Activated naive CD8-positive, alpha-beta T cell treated with anti-CD3 and anti-CD28 coated beads, Interleukin-2, amount 10 ng/mL, durations not matched to agents 7 days and 5 days (primary cell): ENCODE measurements at regions of chr4 and their contacts with region 1.

Region 1: DNA sequence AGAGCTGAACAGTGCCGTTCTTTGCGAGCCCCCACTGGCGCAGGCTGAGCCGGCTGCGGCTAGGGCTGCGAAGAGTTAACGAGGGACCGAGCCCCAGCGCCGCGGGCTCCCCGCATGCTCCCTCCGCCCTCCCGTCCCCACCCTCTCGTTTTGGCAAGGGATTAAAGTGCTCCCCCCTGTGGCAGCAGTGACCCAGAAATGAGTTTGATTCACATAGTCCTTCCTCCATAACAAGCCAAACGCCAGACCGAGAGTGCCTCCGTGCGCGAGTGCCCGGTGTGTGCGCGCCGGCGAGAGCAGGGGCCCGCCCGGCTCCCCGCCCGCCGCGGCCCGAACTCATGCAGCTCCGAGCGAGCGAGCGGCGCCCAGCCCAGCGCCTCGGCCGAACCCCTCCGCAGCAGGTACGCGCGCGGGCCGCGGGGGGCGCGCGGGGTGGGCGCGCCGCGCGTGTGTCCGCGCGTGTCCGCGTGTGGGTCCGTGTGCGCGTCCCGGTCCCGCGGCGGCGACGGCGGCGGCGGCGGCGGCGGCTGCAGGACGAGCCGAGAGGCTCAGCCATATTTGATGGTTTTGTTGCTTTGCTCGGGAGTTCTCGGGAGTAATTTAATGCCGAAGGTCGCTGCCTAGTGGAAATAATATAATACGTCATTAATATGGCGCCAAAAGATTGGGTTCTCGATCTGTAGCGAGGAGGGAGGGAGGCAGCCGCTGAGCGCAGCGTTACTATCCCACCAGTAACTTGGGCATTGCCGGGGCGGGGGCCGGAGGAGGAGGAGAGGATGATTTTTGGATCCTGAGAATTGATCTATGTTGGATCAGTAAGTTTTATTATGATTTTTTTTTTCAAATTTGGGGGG is at the start of gene JADE1:
- DNase-seq: peak; percentile 87
- ATAC-seq: peak; percentile 62
- H3K4me3 Mint-ChIP-seq: peak within 1 kb of the TSS; percentile 98
- H3K27ac Mint-ChIP-seq: peak within 1 kb of the TSS; percentile 100
- H3K4me1 Mint-ChIP-seq: peaks cover 12% of the 10 kb centered on the region
- H3K27me3 Mint-ChIP-seq: no peaks in the 10 kb centered on the region
- total RNA-seq, gene JADE1: 39.2 to 40.3 TPM

Region 2: GRCh38 chr4:128287871-128288688 is 521.6 kb before region 1 on chr4:
- POLR2A ChIA-PET with region 1: interaction called, 23 read pairs
- DNase-seq: peak; percentile 98
- ATAC-seq: peak; percentile 89
- H3K4me3 Mint-ChIP-seq: peak overlapping the region; percentile 92
- H3K27ac Mint-ChIP-seq: peak overlapping the region; percentile 92
- H3K4me1 Mint-ChIP-seq: peaks cover 28% of the 10 kb centered on the region
- H3K27me3 Mint-ChIP-seq: no peaks in the 10 kb centered on the region

Region 3: GRCh38 chr4:128854433-128854832 is 44.7 kb after region 1 on chr4:
- POLR2A ChIA-PET with region 1: interaction called, 46 read pairs
- DNase-seq: no peak
- ATAC-seq: peak; percentile 99
- H3K4me3 Mint-ChIP-seq: peak overlapping the region; percentile 67
- H3K27ac Mint-ChIP-seq: peak overlapping the region; percentile 91
- H3K4me1 Mint-ChIP-seq: peaks cover 32% of the 10 kb centered on the region
- H3K27me3 Mint-ChIP-seq: no peaks in the 10 kb centered on the region

Region 4: DNA sequence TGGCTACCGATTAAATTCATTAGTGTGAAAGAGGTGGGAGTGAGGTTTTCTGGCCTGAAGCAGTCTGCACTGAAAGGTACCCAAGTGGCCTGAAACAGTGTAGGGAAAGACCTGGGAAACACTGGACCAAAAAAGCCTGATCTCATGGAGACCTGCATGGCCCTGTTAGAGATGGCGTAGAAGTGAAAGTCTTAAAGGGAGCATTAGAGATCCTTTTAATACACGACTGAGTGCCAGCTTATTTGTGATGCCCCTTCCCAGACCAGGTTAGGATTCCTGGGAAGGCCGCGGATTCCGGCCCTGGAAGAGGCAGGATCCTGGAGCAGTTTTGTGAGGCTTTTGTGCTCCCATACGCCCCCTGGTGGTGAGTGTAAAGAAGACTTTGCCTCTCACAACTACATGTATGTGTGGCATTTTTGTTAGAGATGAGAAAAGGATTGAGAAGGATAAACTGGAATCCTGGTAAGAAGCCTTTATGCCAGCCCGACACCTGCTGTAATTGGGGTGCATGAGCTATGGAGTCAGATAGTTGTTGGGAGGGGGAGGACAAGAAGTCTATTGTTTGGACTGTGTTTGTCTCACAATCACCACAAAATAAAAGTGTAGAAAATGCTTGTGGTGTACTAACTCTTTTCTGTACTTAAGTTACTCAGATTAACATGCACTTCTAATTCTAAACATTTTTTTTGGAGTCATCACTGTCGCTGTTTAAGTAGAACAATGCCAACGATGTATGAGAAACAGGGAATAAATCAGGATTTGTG is 53.8 kb after region 1 on chr4:
- POLR2A ChIA-PET with region 1: interaction called, 14 read pairs
- DNase-seq: peak; percentile 59
- ATAC-seq: no peak
- H3K4me3 Mint-ChIP-seq: no peak overlapping the region
- H3K27ac Mint-ChIP-seq: no peak overlapping the region
- H3K4me1 Mint-ChIP-seq: peaks cover 36% of the 10 kb centered on the region
- H3K27me3 Mint-ChIP-seq: no peaks in the 10 kb centered on the region

Region 5: GRCh38 chr4:129093191-129093920 is 283.7 kb after region 1 on chr4 and contains the start of gene SCLT1:
- POLR2A ChIA-PET with region 1: interaction called, 80 read pairs
- DNase-seq: peak; percentile 93
- ATAC-seq: peak; percentile 92
- H3K4me3 Mint-ChIP-seq: no peak within 1 kb of the TSS
- H3K27ac Mint-ChIP-seq: no peak within 1 kb of the TSS
- H3K4me1 Mint-ChIP-seq: peaks cover 36% of the 10 kb centered on the region
- H3K27me3 Mint-ChIP-seq: no peaks in the 10 kb centered on the region
- total RNA-seq, gene SCLT1: 35.1 TPM